Left ventricle myocardium inferior (tissue), 1 donor: ENCODE measurements at regions of chr5 and their contacts with region 1.

Region 1: GRCh38 chr5:150560401-150561193 is 52.7 kb downstream of the NDST1 start:
- DNase-seq: peak; percentile 48
- H3K4me3 ChIP-seq: no peak overlapping the region
- H3K27ac ChIP-seq: no peak overlapping the region
- H3K4me1 ChIP-seq: peaks cover 24% of the 10 kb centered on the region
- H3K27me3 ChIP-seq: no peaks in the 10 kb centered on the region
- CTCF ChIP-seq: peak; percentile 95

Region 2: GRCh38 chr5:149824846-149825245 is 735.8 kb before region 1 on chr5:
- intact Hi-C with region 1: no loop called
- DNase-seq: peak; percentile 49
- H3K4me3 ChIP-seq: peak overlapping the region; percentile 32
- H3K27ac ChIP-seq: peak overlapping the region; percentile 88
- H3K4me1 ChIP-seq: peaks cover 98% of the 10 kb centered on the region
- H3K27me3 ChIP-seq: no peaks in the 10 kb centered on the region
- CTCF ChIP-seq: no peak

Region 3: GRCh38 chr5:150656191-150657132 is 95.9 kb after region 1 on chr5:
- intact Hi-C with region 1: loop called (anchors 5 kb)
- DNase-seq: peak; percentile 77
- H3K4me3 ChIP-seq: peak overlapping the region; percentile 71
- H3K27ac ChIP-seq: peak overlapping the region; percentile 94
- H3K4me1 ChIP-seq: peaks cover 84% of the 10 kb centered on the region
- H3K27me3 ChIP-seq: no peaks in the 10 kb centered on the region
- CTCF ChIP-seq: peak; percentile 81

Region 4: DNA sequence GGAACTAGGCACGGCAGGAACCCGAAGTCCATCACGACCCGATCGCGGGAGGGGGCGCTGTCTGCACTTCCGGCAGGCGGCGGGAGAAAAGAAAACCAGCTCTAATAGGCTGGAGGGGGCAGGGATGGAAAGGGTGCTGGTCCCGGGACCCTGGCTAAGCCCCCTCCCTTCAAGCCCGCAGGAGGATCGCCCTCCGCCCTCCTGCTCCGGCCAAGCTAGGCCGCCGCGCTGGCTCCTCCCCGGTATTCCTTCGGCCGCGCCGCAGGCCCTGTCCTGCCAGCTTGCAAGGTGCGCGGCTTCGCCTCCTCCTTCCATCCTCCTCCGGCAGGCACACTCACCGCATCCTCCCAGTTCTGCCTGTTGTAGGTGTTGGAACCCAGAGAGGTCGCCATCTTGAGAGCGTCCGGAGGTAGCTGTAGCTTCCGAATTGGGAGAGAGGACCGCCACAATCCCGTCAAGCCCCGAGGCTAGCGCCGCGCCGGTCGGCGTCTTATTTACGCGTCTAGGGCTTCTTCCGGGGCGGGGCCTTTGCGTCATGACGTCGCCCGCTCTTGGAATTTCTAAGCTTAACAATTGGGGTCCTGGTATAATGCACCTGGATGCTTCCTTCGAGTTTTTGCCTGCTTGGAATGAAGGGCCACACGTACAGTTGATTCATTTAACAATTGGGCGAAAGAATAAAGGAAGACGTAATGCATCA is 140.1 kb after region 1 on chr5 and contains the start of gene RBM22:
- intact Hi-C with region 1: loop called (anchors 10 kb)
- DNase-seq: peak; percentile 95
- H3K4me3 ChIP-seq: peak within 1 kb of the TSS; percentile 94
- H3K27ac ChIP-seq: peak within 1 kb of the TSS; percentile 97
- H3K4me1 ChIP-seq: peaks cover 30% of the 10 kb centered on the region
- H3K27me3 ChIP-seq: no peaks in the 10 kb centered on the region
- CTCF ChIP-seq: peak; percentile 72
- total RNA-seq, gene RBM22: 25.2 TPM

Region 5: GRCh38 chr5:150846654-150847333 is 286.2 kb after region 1 on chr5:
- intact Hi-C with region 1: loop called (anchors 5 kb)
- DNase-seq: no peak
- H3K4me3 ChIP-seq: no peak overlapping the region
- H3K27ac ChIP-seq: no peak overlapping the region
- H3K4me1 ChIP-seq: peaks cover 4% of the 10 kb centered on the region
- H3K27me3 ChIP-seq: no peaks in the 10 kb centered on the region
- CTCF ChIP-seq: peak; percentile 76